ENCODE measurements at regions of chr4 and their contacts with region 1.

Region 1: DNA sequence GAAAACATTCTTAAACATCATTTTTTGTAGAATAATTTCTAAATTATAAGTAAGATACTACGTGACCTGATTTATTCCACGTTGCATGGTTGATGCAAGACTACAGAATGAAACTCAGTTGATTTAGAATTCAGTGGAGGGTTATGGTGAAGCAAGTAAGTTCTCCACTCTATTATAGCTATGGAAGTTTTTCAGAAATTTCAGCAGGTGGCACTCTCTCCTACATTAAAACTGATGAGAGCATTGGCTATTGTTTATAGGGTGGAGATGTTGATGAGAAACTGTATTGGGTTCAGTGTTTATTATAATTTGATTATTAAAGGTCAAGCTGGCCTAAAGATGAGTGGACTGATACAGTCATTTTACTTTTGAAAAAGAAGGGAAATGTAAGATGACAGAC is 88.0 kb downstream of the FNIP2 start:
- DNase-seq: no peak

Region 2: GRCh38 chr4:159175085-159175988 is 318.5 kb after region 1 on chr4:
- intact Hi-C with region 1: loop called (anchors 1 kb)
- DNase-seq: peak in 9 of 10 donors; percentile 35 to 92 (median 64)

Region 3: DNA sequence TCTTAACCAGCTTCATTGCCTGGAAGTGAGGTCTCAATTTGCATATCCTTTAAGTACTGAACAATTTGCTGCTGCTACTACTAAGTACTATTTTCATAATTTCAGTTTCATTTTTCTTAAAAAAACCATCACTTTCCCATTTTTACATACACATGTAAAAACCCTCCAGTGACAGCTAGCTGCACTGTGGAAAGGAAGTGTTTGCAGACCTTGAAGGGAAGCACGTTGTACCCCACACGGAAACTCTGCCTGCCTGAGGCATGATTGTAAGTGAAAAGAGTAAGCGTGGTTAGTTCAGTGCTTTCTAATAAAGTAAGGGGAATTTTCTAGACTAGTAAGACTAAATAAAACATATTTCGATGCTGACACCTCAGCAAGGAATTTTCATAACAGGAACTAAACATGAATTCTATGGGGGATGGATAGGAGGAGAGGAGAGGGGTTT is 349.6 kb after region 1 on chr4:
- intact Hi-C with region 1: loop called (anchors 10 kb)
- DNase-seq: no peak